ENCODE measurements at regions of chr18 and their contacts with region 1.

Region 1: GRCh38 chr18:58768293-58768974 is 96.2 kb upstream of the ZNF532 start:
- DNase-seq: peak; percentile 94
- H3K4me3 ChIP-seq: peak overlapping the region; percentile 38 to 62
- H3K27ac ChIP-seq: no peak overlapping the region; a peak in 1 of 4 replicates
- H3K4me1 ChIP-seq: peaks cover 2 to 4% of the 10 kb centered on the region in 2 experiments; a peak in 1 of 4 replicates
- H3K27me3 ChIP-seq: no peaks in the 10 kb centered on the region
- CTCF ChIP-seq: peak; percentile 82
- EP300 ChIP-seq: no peak
- RAD21 ChIP-seq: peak; percentile 83

Region 2: DNA sequence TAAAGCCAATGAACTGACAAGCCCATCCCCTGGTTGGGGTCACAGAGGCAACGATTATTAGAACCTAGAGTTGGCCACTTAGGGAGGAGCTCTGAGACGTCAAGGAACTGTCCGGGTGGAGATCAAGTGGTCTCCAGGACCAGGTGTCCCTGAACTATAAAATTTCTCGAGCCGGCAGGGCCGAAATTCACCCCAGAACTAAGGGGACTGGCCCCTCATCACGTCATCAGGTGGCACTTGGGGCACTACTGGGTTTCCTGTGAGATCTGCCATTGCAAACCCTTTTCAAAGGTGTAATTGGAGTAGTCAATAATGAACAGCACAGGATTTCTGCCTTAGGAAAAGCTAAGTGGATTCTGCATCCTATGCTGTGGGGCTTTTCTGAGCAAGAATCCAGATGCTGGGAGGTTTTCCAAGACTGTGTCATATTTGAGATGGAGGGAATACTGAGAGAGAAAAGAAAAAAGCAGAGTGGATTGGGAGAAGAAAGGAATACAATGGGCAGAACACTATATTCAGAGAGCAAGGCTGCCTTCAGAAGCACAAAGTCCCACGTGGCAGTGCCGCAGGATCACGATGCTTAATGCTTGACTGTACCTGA is 253.2 kb before region 1 on chr18:
- CTCF ChIA-PET with region 1: interaction called, 31 read pairs
- POLR2A ChIA-PET with region 1: no interaction called
- DNase-seq: no peak
- H3K4me3 ChIP-seq: no peak overlapping the region
- H3K27ac ChIP-seq: no peak overlapping the region
- H3K4me1 ChIP-seq: no peaks in the 10 kb centered on the region; a peak in 1 of 4 replicates
- H3K27me3 ChIP-seq: no peaks in the 10 kb centered on the region
- CTCF ChIP-seq: no peak
- EP300 ChIP-seq: no peak
- RAD21 ChIP-seq: no peak

Region 3: DNA sequence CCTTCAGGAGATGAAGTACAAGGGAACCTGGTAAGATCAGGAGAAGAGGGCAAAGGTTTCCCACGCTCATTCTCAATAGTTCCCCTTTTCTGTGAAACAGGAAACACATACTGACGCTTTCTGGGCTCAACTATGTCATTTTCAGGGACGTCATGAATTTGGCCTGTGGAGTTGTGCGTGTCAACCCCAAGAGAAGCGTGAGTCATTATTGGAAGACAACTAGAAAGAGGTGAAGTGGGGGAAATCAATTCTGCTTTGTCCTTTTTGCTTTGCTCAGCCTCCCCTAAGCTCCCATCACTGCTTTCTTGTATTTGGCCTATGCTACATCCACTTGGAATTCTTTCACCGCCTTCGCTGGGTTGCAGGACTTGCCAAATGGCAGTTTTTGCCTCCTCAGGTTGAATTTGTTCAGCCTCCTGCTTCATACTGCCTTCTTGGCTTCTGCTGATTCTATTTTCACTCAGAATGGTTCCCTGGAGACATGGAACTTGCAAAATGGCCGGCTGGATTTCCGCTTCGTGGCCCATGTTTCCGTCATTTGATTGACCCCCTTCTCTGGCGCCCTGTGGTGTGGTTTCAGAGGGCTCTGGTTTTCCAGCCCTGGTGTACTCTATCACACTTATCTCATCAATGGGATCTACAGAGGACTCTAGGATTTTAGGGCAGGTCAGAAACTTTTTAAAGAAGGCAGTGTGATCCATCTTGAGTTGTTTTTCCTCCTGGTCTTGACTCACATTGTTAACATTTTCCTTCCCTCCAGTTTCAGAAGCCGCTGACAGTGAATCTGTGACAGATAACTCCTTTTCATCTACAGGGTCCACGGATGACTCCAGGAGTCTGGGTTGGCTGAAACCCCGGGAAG is 232.9 kb before region 1 on chr18:
- CTCF ChIA-PET with region 1: interaction called, 162 read pairs
- POLR2A ChIA-PET with region 1: interaction called, 4 read pairs
- DNase-seq: no peak
- H3K4me3 ChIP-seq: no peak overlapping the region
- H3K27ac ChIP-seq: no peak overlapping the region
- H3K4me1 ChIP-seq: no peaks in the 10 kb centered on the region
- H3K27me3 ChIP-seq: no peaks in the 10 kb centered on the region
- CTCF ChIP-seq: no peak
- EP300 ChIP-seq: no peak
- RAD21 ChIP-seq: no peak

Region 4: DNA sequence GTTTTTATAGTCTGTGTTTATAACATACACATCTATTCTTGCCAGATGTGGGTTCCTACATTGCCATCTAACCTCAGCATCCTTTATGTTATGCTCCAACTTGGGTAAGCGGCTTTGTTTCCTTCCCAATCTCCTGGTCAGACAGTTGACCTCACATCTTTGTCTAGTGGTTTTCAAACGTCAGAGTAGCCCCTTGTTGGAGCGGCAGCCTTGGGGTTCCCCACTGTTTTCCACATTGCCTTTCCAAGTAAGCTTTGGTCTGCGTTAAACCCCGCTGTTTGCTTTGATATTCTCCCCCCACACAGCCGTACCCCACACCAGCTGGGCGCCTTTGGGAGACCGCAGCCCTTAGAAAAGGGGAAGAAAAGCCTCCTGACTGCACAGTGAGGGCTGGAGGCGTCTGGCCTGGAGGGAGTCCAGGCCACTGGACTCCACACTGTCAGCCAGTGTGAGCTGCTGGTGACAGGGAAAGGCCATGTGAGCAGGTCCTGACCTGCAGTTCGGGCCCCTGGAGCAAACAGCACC is 13.8 kb before region 1 on chr18:
- CTCF ChIA-PET with region 1: interaction called, 59 read pairs
- POLR2A ChIA-PET with region 1: no interaction called
- DNase-seq: no peak
- H3K4me3 ChIP-seq: no peak overlapping the region
- H3K27ac ChIP-seq: no peak overlapping the region
- H3K4me1 ChIP-seq: no peaks in the 10 kb centered on the region; a peak in 1 of 4 replicates
- H3K27me3 ChIP-seq: no peaks in the 10 kb centered on the region
- CTCF ChIP-seq: no peak
- EP300 ChIP-seq: no peak
- RAD21 ChIP-seq: no peak

Region 5: DNA sequence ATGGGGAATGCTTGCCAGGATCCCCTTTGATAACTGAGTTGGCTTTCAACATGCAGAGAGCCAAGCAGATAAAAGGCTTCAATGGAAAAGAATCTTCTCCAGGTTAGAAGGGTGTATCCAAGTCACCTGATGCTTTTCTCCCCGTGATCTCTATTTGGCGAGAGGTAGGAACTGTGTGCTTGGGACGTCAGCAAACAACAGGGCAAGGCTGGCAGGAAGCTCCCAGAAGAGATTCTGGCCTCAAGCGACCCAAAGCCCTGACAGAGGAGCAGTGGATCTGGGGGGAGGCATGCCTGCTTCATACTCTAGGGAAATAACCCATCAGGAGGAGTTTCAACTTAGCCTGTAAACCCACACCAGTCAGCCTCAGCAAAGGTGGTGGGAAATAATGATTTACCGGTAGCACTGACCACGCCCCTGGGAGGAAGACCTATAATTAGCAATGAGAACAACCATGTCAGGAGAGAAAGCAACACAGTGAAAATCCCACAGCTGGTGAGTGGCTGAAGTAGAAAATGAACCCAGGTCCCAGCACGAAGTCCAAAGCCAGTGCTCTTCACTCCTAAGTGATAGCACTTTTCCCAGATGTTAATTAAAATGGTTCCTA is 295.0 kb after region 1 on chr18:
- CTCF ChIA-PET with region 1: interaction called, 215 read pairs
- POLR2A ChIA-PET with region 1: no interaction called
- DNase-seq: no peak
- H3K4me3 ChIP-seq: no peak overlapping the region
- H3K27ac ChIP-seq: no peak overlapping the region
- H3K4me1 ChIP-seq: no peaks in the 10 kb centered on the region; a peak in 1 of 4 replicates
- H3K27me3 ChIP-seq: no peaks in the 10 kb centered on the region
- CTCF ChIP-seq: no peak
- EP300 ChIP-seq: no peak
- RAD21 ChIP-seq: no peak

Region 6: GRCh38 chr18:59085797-59086196 is 317.4 kb after region 1 on chr18:
- CTCF ChIA-PET with region 1: interaction called, 33 read pairs
- POLR2A ChIA-PET with region 1: no interaction called
- DNase-seq: no peak
- H3K4me3 ChIP-seq: no peak overlapping the region
- H3K27ac ChIP-seq: peak overlapping the region in 1 of 2 experiments; percentile 31; a peak in 1 of 4 replicates
- H3K4me1 ChIP-seq: peaks cover 2 to 21% of the 10 kb centered on the region in 2 experiments; a peak in 3 of 4 replicates
- H3K27me3 ChIP-seq: no peaks in the 10 kb centered on the region
- CTCF ChIP-seq: no peak
- EP300 ChIP-seq: no peak
- RAD21 ChIP-seq: no peak

Measured in SK-N-SH (cell line).